Tibial artery (tissue), 4 donors: ENCODE measurements at regions of chr6 and their contacts with region 1.

Region 1: DNA sequence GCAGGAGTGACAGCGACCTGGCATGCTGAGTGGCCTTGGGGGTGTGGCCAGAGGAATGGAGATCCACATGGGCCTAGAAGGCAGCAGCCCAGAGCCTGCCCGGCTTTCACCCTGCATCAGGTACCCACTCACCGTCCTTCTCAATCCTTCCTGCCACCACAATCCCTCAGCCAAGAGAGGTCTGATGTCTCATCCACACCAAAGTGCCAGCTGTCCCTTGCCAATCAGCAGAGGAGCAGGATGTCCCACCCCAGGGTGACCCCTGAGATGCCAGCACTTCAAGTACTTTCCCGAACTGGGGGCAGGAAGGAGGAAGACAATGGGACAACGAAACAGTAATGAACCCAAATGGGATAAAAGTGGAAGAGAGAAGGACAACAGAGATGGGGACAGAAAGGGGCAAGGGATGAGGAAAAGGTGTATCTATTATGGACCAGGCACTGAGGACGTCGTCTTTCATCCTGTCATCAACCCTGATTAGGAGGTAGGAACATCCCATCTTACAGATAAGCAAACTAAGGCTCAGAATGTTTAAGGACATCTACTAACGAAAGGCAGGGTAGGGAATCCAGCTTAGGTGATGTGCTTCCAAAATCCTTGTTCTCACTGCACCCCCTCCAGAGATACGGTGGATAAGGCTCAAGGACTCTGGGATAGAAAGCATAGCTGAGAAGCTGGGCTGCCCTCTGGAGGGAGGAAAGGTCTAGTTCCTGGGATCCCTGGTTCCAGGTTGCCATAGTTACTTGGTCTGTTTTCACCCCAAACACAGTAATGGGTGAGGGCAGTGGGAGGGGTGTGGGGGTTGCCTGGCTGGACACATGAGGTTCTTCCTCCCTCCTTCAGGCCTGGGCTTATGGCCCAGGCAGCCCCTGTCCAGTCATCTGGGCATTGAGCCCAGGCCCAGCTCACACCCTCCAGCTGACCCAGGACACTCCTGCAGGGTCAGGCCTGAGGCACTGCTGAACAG is 4.5 kb upstream of the TNXB start:
- DNase-seq: peak; percentile 92 to 96
- H3K4me3 ChIP-seq: no peak overlapping the region
- H3K27ac ChIP-seq: peak overlapping the region; percentile 75 to 81
- H3K4me1 ChIP-seq: peaks cover 0 to 60% (median 39%) of the 10 kb centered on the region in 4 donors
- H3K27me3 ChIP-seq: no peaks in the 10 kb centered on the region
- CTCF ChIP-seq: peak; percentile 57 to 66

Region 2: GRCh38 chr6:32070814-32071543 is 42.7 kb before region 1 on chr6:
- intact Hi-C with region 1: no loop called
- DNase-seq: peak; percentile 78 to 85
- H3K4me3 ChIP-seq: no peak overlapping the region
- H3K27ac ChIP-seq: peak overlapping the region; percentile 28 to 52
- H3K4me1 ChIP-seq: no peaks in the 10 kb centered on the region
- H3K27me3 ChIP-seq: no peaks in the 10 kb centered on the region
- CTCF ChIP-seq: no peak

Region 3: DNA sequence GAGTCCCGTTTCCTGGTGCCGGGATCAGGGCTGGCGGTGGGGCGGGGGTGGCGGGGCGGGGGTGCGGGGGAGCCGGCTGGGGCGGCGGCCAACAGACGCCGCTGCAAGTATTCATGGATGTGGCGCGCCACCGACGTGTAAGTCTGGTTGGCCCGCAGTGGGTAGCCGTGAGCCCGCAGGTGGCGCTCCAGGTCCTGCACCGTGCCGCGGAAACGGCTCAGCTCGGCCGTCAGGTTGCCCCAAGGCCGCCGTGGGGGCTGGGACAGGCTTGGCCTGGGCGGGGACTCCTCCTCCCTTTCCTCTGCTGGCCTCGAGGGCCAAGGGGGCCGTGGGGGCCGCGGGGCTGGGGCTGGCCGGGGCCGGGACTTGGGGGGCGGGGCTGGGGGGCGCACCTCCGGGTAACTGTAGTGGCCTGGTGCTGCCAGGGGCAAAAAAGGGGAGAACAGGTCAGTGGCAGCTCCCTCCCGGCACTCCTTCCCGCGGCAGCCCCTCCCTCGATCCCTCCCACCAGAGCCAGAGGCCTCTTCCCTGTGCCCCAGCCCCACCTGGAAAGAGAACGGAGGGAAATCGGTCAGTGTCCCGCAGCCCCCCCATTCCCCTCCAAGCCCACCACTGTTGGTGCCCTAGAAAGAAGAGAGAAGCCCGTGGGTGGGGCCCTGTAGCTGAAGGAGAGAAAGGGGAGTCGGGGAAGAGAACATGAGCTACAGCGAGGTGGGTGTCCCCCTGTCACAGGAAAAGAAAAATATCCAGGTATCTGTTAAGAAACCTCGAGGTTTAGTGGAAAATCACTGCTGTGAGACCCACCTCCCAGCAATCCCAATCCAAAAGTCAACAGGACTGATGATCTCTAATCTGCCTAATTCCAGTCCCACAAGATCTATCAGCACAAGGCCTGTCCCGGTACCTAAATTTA is 25.8 kb before region 1 on chr6:
- intact Hi-C with region 1: loop called (anchors 1 kb)
- DNase-seq: peak; percentile 85 to 95
- H3K4me3 ChIP-seq: peak overlapping the region; percentile 38 to 44
- H3K27ac ChIP-seq: peak overlapping the region; percentile 85 to 87
- H3K4me1 ChIP-seq: peaks cover 0 to 44% (median 32%) of the 10 kb centered on the region in 4 donors
- H3K27me3 ChIP-seq: no peaks in the 10 kb centered on the region
- CTCF ChIP-seq: peak; percentile 57 to 69

Region 4: GRCh38 chr6:32092760-32093497 is 20.7 kb before region 1 on chr6:
- intact Hi-C with region 1: loop called (anchors 2 kb)
- DNase-seq: peak; percentile 64 to 81
- H3K4me3 ChIP-seq: peak overlapping the region in 1 of 2 donors; percentile 19
- H3K27ac ChIP-seq: peak overlapping the region; percentile 85 to 87
- H3K4me1 ChIP-seq: peaks cover 0 to 67% (median 41%) of the 10 kb centered on the region in 4 donors
- H3K27me3 ChIP-seq: no peaks in the 10 kb centered on the region
- CTCF ChIP-seq: no peak